Activated T-helper 2 cell treated with anti-CD3 and anti-CD28 coated beads, Interferon-gamma antibody, Interleukin-2, Interleukin-4, amounts not matched to agents 10 μg/mL and 5 μg/mL and 100 μg/mL, durations not matched to agents 14 hours and 24 hours and 36 hours (primary cell): ENCODE measurements at regions of chr7 and their contacts with region 1.

Region 1: DNA sequence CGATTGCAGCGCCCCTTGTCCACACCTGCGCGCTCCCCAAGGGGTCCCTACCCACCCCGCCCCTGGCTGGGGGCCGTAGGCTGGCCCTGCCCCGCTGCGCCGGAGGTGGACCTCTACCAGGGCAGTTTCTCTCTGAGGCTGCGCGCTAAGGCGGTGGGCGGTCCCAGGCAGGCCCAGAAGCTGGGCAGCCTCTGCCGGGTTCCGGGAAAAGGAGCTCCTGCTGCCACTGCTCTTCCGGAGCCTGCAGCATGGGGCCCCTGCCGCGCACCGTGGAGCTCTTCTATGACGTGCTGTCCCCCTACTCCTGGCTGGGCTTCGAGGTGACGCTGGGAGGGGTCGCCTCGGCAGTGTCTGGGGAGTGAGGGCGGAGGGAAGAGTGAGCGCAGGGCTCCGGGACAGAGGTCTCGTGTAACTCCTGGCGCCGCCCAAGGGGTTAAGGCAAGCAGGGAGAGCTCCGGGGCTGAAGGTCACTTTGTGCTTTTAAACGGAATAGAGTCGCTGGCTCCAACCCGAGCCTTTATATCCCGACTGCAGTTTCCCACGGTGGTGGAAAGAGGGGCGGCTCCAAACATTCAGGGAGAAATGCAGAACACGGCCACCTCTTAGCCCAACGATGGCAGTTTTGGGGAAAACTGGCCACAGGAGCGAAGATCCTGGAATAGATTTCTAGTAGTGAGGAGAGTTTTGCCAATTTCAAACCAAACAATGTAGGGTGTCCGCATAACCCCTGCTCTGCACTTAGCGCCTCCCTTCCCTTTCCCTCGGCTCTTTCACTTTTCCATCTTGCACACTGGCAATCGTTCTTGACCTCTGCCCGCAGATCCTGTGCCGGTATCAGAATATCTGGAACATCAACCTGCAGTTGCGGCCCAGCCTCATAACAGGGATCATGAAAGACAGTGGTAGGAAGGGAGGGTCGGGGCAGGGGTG is at the start of gene GSTK1:
- DNase-seq: peak; percentile 76
- H3K4me3 Mint-ChIP-seq: peak within 1 kb of the TSS; percentile 97
- H3K27ac Mint-ChIP-seq: peak within 1 kb of the TSS; percentile 94
- H3K4me1 Mint-ChIP-seq: peaks cover 49% of the 10 kb centered on the region
- H3K27me3 Mint-ChIP-seq: no peaks in the 10 kb centered on the region
- total RNA-seq, gene GSTK1: 166 and 168 TPM in 2 replicates

Region 2: GRCh38 chr7:143250822-143251221 is 12.7 kb before region 1 on chr7:
- intact Hi-C with region 1: loop called (anchors 1 kb)
- DNase-seq: no peak
- H3K4me3 Mint-ChIP-seq: peak overlapping the region; percentile 9
- H3K27ac Mint-ChIP-seq: peak overlapping the region; percentile 72
- H3K4me1 Mint-ChIP-seq: peaks cover 69% of the 10 kb centered on the region
- H3K27me3 Mint-ChIP-seq: no peaks in the 10 kb centered on the region

Region 3: GRCh38 chr7:143279186-143280098 is 15.9 kb after region 1 on chr7:
- intact Hi-C with region 1: loop called (anchors 1 kb)
- DNase-seq: no peak
- H3K4me3 Mint-ChIP-seq: peak overlapping the region; percentile 72
- H3K27ac Mint-ChIP-seq: peak overlapping the region; percentile 82
- H3K4me1 Mint-ChIP-seq: peaks cover 41% of the 10 kb centered on the region
- H3K27me3 Mint-ChIP-seq: no peaks in the 10 kb centered on the region

Region 4: GRCh38 chr7:143287935-143288826 is 24.6 kb after region 1 on chr7 and contains the start of gene CASP2:
- intact Hi-C with region 1: loop called (anchors 1 kb)
- DNase-seq: peak; percentile 99
- H3K4me3 Mint-ChIP-seq: peak within 1 kb of the TSS; percentile 95
- H3K27ac Mint-ChIP-seq: peak within 1 kb of the TSS; percentile 87
- H3K4me1 Mint-ChIP-seq: peaks cover 47% of the 10 kb centered on the region
- H3K27me3 Mint-ChIP-seq: no peaks in the 10 kb centered on the region
- total RNA-seq, gene CASP2: 116 and 122 TPM in 2 replicates

Region 5: GRCh38 chr7:143299840-143300239 is 36.3 kb after region 1 on chr7:
- intact Hi-C with region 1: loop called (anchors 2 kb)
- DNase-seq: peak; percentile 35
- H3K4me3 Mint-ChIP-seq: no peak overlapping the region
- H3K27ac Mint-ChIP-seq: no peak overlapping the region
- H3K4me1 Mint-ChIP-seq: peaks cover 58% of the 10 kb centered on the region
- H3K27me3 Mint-ChIP-seq: no peaks in the 10 kb centered on the region